ENCODE measurements at regions of chr3 and their contacts with region 1.

Region 1: DNA sequence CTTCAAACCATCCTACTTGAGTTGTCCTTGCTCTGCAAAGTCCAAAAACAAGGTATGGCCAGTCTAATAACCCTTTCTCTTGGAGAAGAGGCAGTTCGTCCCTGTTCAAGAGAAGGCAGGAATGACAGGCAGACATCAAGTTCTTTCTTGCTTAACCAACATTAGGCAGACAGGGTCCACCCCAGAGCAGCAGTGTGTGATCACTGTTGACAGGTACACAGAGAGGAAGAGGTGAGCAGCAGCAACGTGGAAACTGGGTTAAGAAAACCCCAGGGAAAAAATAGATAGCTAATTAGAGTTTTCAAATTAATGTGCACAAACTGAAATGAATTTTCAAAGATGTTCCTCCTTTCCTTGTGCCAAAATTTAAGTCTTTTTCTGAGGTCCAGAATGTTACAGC is 48.2 kb downstream of the TNIK start:
- DNase-seq: no peak
- ATAC-seq: no peak
- H3K4me3 ChIP-seq: no peak overlapping the region
- H3K4me3 Mint-ChIP-seq: peak overlapping the region in 3 of 10 donors; percentile 10 to 61 (median 15)
- H3K27ac ChIP-seq: no peak overlapping the region
- H3K27ac Mint-ChIP-seq: peak overlapping the region in 4 of 9 donors; percentile 7 to 64 (median 34)
- H3K4me1 ChIP-seq: peaks cover 0 to 19% of the 10 kb centered on the region in 2 donors
- H3K4me1 Mint-ChIP-seq: peaks cover 26 to 89% (median 76%) of the 10 kb centered on the region in 7 donors
- H3K27me3 ChIP-seq: no peaks in the 10 kb centered on the region
- H3K27me3 Mint-ChIP-seq: no peaks in the 10 kb centered on the region

Region 2: GRCh38 chr3:170488798-170489197 is 923.3 kb before region 1 on chr3:
- CTCF ChIA-PET with region 1: no interaction called
- POLR2A ChIA-PET with region 1: no interaction called
- intact Hi-C with region 1: no loop called
- DNase-seq: no peak
- ATAC-seq: no peak
- H3K4me3 ChIP-seq: no peak overlapping the region
- H3K4me3 Mint-ChIP-seq: no peak overlapping the region
- H3K27ac ChIP-seq: no peak overlapping the region
- H3K27ac Mint-ChIP-seq: no peak overlapping the region
- H3K4me1 ChIP-seq: no peaks in the 10 kb centered on the region
- H3K4me1 Mint-ChIP-seq: no peaks in the 10 kb centered on the region
- H3K27me3 ChIP-seq: no peaks in the 10 kb centered on the region
- H3K27me3 Mint-ChIP-seq: peaks cover 5 to 12% (median 10%) of the 10 kb centered on the region in 5 donors

Region 3: GRCh38 chr3:171306631-171307030 is 105.4 kb before region 1 on chr3:
- CTCF ChIA-PET with region 1: no interaction called
- POLR2A ChIA-PET with region 1: no interaction called
- intact Hi-C with region 1: no loop called
- DNase-seq: no peak
- ATAC-seq: no peak
- H3K4me3 ChIP-seq: no peak overlapping the region
- H3K4me3 Mint-ChIP-seq: no peak overlapping the region
- H3K27ac ChIP-seq: no peak overlapping the region
- H3K27ac Mint-ChIP-seq: no peak overlapping the region
- H3K4me1 ChIP-seq: peaks cover 0 to 5% of the 10 kb centered on the region in 2 donors
- H3K4me1 Mint-ChIP-seq: peaks cover 27 to 92% (median 82%) of the 10 kb centered on the region in 7 donors
- H3K27me3 ChIP-seq: no peaks in the 10 kb centered on the region
- H3K27me3 Mint-ChIP-seq: no peaks in the 10 kb centered on the region

Region 4: GRCh38 chr3:171427771-171428320 is 15.8 kb after region 1 on chr3:
- CTCF ChIA-PET with region 1: no interaction called
- POLR2A ChIA-PET with region 1: no interaction called
- intact Hi-C with region 1: loop called in 1 of 2 experiments (anchors 2 kb)
- DNase-seq: no peak
- ATAC-seq: no peak
- H3K4me3 ChIP-seq: no peak overlapping the region
- H3K4me3 Mint-ChIP-seq: no peak overlapping the region
- H3K27ac ChIP-seq: no peak overlapping the region
- H3K27ac Mint-ChIP-seq: no peak overlapping the region
- H3K4me1 ChIP-seq: peaks cover 0 to 11% of the 10 kb centered on the region in 2 donors
- H3K4me1 Mint-ChIP-seq: peaks cover 0 to 30% (median 24%) of the 10 kb centered on the region in 7 donors
- H3K27me3 ChIP-seq: no peaks in the 10 kb centered on the region
- H3K27me3 Mint-ChIP-seq: no peaks in the 10 kb centered on the region

Region 5: GRCh38 chr3:171465763-171466162 is 53.7 kb after region 1 on chr3:
- CTCF ChIA-PET with region 1: no interaction called
- POLR2A ChIA-PET with region 1: no interaction called
- intact Hi-C with region 1: no loop called
- DNase-seq: no peak
- ATAC-seq: no peak
- H3K4me3 ChIP-seq: no peak overlapping the region
- H3K4me3 Mint-ChIP-seq: peak overlapping the region in 1 of 10 donors; percentile 8
- H3K27ac ChIP-seq: no peak overlapping the region
- H3K27ac Mint-ChIP-seq: no peak overlapping the region
- H3K4me1 ChIP-seq: peaks cover 0 to 15% of the 10 kb centered on the region in 2 donors
- H3K4me1 Mint-ChIP-seq: peaks cover 10 to 21% (median 20%) of the 10 kb centered on the region in 7 donors
- H3K27me3 ChIP-seq: no peaks in the 10 kb centered on the region
- H3K27me3 Mint-ChIP-seq: peaks cover 0 to 2% (median 0%) of the 10 kb centered on the region in 5 donors

Region 6: DNA sequence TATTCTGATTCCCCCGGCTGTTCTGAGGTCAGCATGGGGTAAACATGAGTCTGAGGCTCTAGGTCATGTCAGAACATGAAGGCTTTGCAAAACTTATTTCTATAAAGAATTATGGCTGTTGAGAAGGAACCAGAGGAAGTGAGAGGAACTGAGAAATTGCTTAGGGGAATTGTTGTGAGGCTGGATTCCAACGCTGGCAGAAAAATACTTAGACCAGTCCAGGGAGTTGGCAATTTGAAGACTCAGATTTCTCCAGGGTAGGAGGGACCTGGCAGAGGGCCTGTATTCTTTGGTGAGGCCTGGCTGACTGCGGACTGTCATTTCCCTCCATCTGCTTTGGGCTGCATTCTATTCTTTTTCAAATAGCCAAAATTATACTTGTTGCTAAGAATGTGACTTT is 242.8 kb after region 1 on chr3:
- CTCF ChIA-PET with region 1: no interaction called
- POLR2A ChIA-PET with region 1: no interaction called
- intact Hi-C with region 1: no loop called
- DNase-seq: no peak
- ATAC-seq: no peak
- H3K4me3 ChIP-seq: no peak overlapping the region
- H3K4me3 Mint-ChIP-seq: no peak overlapping the region
- H3K27ac ChIP-seq: no peak overlapping the region
- H3K27ac Mint-ChIP-seq: no peak overlapping the region
- H3K4me1 ChIP-seq: no peaks in the 10 kb centered on the region
- H3K4me1 Mint-ChIP-seq: no peaks in the 10 kb centered on the region
- H3K27me3 ChIP-seq: no peaks in the 10 kb centered on the region
- H3K27me3 Mint-ChIP-seq: peaks cover 0 to 23% (median 0%) of the 10 kb centered on the region in 5 donors

Measured in naive thymus-derived CD4-positive, alpha-beta T cell (primary cell).